CD14-positive monocyte (primary cell): ENCODE measurements at regions of chr11 and their contacts with region 1.

Region 1: DNA sequence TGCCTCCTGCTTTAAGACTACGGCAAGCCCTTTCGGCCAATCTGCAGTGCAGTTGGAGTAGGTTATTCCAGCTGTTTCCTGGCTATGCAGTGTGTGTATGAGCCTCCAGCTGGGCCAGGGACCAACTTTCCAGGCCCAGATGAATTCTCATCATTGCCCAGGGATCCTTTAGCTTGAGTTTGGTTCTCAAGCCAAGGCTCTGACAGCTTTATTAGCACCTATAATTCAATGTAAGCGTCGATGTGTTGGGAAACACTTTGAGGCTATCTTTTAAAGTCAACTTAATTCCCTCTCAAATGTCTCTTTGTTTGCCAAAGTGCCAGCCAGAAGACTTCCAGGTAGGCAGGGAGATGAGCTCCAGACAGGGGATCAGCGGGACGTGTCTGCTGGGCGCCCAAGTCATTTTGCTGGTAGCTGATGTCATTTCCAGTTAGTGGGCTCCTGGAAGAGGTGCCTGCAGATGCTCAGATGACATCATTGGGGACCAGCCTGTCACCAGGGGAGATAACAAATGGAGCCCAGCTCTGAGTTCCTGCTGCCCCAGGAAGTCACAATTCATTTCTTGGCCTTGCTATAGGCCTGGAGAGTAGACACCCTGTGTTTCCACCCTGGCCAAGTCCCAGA is 520.4 kb downstream of the SOX6 start:
- DNase-seq: no peak
- H3K4me3 ChIP-seq: no peak overlapping the region
- H3K4me3 Mint-ChIP-seq: no peak overlapping the region
- H3K27ac ChIP-seq: no peak overlapping the region
- H3K27ac Mint-ChIP-seq: no peak overlapping the region
- H3K4me1 ChIP-seq: no peaks in the 10 kb centered on the region
- H3K4me1 Mint-ChIP-seq: no peaks in the 10 kb centered on the region
- H3K27me3 ChIP-seq: no peaks in the 10 kb centered on the region
- H3K27me3 Mint-ChIP-seq: peaks cover 0 to 9% (median 0%) of the 10 kb centered on the region in 3 donors
- CTCF ChIP-seq: no peak

Region 2: GRCh38 chr11:15783611-15784010 is 52.3 kb before region 1 on chr11:
- intact Hi-C with region 1: loop called in 1 of 2 experiments (anchors 10 kb)
- DNase-seq: no peak
- H3K4me3 ChIP-seq: no peak overlapping the region
- H3K4me3 Mint-ChIP-seq: no peak overlapping the region
- H3K27ac ChIP-seq: no peak overlapping the region
- H3K27ac Mint-ChIP-seq: no peak overlapping the region
- H3K4me1 ChIP-seq: no peaks in the 10 kb centered on the region
- H3K4me1 Mint-ChIP-seq: no peaks in the 10 kb centered on the region
- H3K27me3 ChIP-seq: peaks cover 0 to 2% of the 10 kb centered on the region in 2 donors
- H3K27me3 Mint-ChIP-seq: peaks cover 0 to 6% (median 0%) of the 10 kb centered on the region in 3 donors
- CTCF ChIP-seq: no peak